Breast epithelium (tissue), 4 donors: ENCODE measurements at regions of chr13 and their contacts with region 1.

Region 1: GRCh38 chr13:67328895-67329294 is 98.8 kb upstream of the PCDH9 start:
- DNase-seq: no peak
- H3K4me3 ChIP-seq: no peak overlapping the region
- H3K27ac ChIP-seq: no peak overlapping the region
- H3K4me1 ChIP-seq: no peaks in the 10 kb centered on the region
- H3K27me3 ChIP-seq: no peaks in the 10 kb centered on the region
- CTCF ChIP-seq: no peak
- POLR2A ChIP-seq: no peak

Region 2: GRCh38 chr13:67343777-67344176 is 14.9 kb after region 1 on chr13:
- intact Hi-C with region 1: no loop called
- DNase-seq: no peak
- H3K4me3 ChIP-seq: no peak overlapping the region
- H3K27ac ChIP-seq: no peak overlapping the region
- H3K4me1 ChIP-seq: no peaks in the 10 kb centered on the region
- H3K27me3 ChIP-seq: no peaks in the 10 kb centered on the region
- CTCF ChIP-seq: no peak
- POLR2A ChIP-seq: no peak

Region 3: GRCh38 chr13:67353941-67354340 is 25.0 kb after region 1 on chr13:
- intact Hi-C with region 1: loop called (anchors 2 kb)
- DNase-seq: no peak
- H3K4me3 ChIP-seq: peak overlapping the region in 1 of 3 donors; percentile 28
- H3K27ac ChIP-seq: no peak overlapping the region
- H3K4me1 ChIP-seq: no peaks in the 10 kb centered on the region
- H3K27me3 ChIP-seq: no peaks in the 10 kb centered on the region
- CTCF ChIP-seq: no peak
- POLR2A ChIP-seq: no peak